Endothelial cell of umbilical vein (primary cell): ENCODE measurements at regions of chr15 and their contacts with region 1.

Region 1: GRCh38 chr15:62254137-62254934 is 89.3 kb upstream of the C2CD4B start:
- DNase-seq: peak; percentile 79
- H3K4me3 ChIP-seq: no peak overlapping the region
- H3K27ac ChIP-seq: no peak overlapping the region
- H3K4me1 ChIP-seq: no peaks in the 10 kb centered on the region
- H3K27me3 ChIP-seq: peaks cover 0 to 2% of the 10 kb centered on the region in 2 experiments
- CTCF ChIP-seq: peak; percentile 81 to 92
- POLR2A ChIP-seq: no peak

Region 2: GRCh38 chr15:61798631-61799030 is 455.7 kb before region 1 on chr15:
- CTCF ChIA-PET with region 1: no interaction called
- POLR2A ChIA-PET with region 1: no interaction called
- dilution Hi-C with region 1: no loop called
- intact Hi-C with region 1: no loop called
- DNase-seq: no peak
- H3K4me3 ChIP-seq: no peak overlapping the region
- H3K27ac ChIP-seq: no peak overlapping the region
- H3K4me1 ChIP-seq: no peaks in the 10 kb centered on the region
- H3K27me3 ChIP-seq: no peaks in the 10 kb centered on the region
- CTCF ChIP-seq: no peak
- POLR2A ChIP-seq: no peak

Region 3: DNA sequence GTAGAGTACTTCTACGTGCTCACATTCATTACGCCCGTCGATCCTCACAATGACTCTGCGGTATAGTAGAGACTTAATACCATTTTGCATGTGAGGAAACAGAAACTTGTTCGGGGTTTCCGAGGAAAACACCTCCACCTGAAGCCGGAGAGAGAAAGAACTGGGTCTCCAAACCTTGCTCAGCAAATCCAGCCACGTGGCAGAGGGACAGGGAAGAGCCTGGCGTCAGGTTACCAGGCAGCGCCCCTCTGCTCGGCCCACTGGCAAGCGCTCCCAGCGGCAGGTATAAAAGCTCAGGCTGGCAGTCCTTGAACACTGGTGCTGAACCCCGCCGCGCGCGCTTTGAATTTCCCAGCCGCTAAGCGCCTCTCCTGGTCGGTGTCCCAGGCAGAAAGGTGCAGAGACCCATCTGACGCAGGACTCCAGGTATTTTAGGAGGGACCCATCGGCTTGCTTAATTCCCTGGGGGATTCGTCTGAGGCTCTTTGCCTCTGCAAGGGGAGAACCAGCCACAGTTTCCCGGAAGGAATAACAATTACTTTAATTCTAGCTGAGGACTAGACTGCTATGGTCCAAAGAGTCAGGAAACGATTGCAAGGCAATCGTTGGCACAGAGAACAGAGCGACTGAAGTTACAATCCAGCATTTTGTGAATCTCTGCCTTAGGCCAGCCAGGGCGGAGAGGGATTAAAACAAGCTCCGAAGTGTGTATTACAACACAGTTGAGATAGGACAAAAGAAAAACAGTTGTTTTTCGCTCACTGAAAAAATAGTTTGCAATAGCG is 187.5 kb before region 1 on chr15 and contains the start of gene C2CD4A:
- CTCF ChIA-PET with region 1: interaction called, 47 read pairs
- POLR2A ChIA-PET with region 1: no interaction called
- dilution Hi-C with region 1: no loop called
- intact Hi-C with region 1: loop called (anchors 1 kb)
- DNase-seq: peak; percentile 81
- H3K4me3 ChIP-seq: peak within 1 kb of the TSS; percentile 37 to 44 (median 38)
- H3K27ac ChIP-seq: no peak within 1 kb of the TSS
- H3K4me1 ChIP-seq: peaks cover 31% of the 10 kb centered on the region
- H3K27me3 ChIP-seq: no peaks in the 10 kb centered on the region
- CTCF ChIP-seq: peak in 1 of 2 donors; percentile 43
- POLR2A ChIP-seq: no peak
- total RNA-seq, gene C2CD4A: 0.46 and 1.1 TPM in 2 replicates

Region 4: DNA sequence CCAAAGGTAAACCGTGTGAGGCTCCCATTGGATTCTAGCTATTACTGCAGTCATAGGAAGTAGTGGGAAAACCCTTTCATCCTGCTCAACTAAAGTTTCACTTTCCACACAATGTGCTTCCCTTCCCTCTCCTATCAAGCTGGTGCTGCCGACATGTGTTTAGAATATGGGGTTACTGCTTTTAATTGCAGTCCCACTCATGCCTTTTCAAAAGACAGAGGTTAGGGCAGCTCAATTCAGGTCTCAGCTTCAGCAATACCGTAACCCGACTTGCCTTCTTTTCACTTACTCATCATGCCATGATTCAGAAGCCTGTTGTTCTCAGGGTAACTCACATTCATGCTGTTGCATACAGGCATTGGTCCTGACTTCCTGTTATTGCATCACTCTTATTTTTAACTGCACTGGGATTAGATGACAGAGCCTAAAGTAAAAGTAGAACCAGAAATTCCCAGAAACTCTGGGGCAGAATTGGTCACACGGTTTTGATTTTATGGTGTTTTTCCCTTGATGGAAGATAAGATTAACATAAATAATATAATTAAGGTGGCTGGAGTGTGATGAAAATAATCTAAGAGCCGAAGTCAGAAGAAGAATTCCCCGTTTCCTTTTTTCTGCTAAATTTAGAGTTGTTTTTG is 135.0 kb before region 1 on chr15:
- CTCF ChIA-PET with region 1: interaction called, 139 read pairs
- POLR2A ChIA-PET with region 1: no interaction called
- dilution Hi-C with region 1: no loop called
- intact Hi-C with region 1: no loop called
- DNase-seq: peak; percentile 98
- H3K4me3 ChIP-seq: peak overlapping the region in 1 of 3 experiments; percentile 13
- H3K27ac ChIP-seq: peak overlapping the region; percentile 92
- H3K4me1 ChIP-seq: peaks cover 41% of the 10 kb centered on the region
- H3K27me3 ChIP-seq: no peaks in the 10 kb centered on the region
- CTCF ChIP-seq: no peak
- POLR2A ChIP-seq: no peak

Region 5: GRCh38 chr15:62165104-62165792 is 89.1 kb before region 1 on chr15 and contains the start of gene C2CD4B:
- CTCF ChIA-PET with region 1: interaction called, 30 read pairs
- POLR2A ChIA-PET with region 1: interaction called, 6 read pairs
- dilution Hi-C with region 1: no loop called
- intact Hi-C with region 1: loop called (anchors 1 kb)
- DNase-seq: peak; percentile 89
- H3K4me3 ChIP-seq: peak within 1 kb of the TSS; percentile 49 to 75 (median 66)
- H3K27ac ChIP-seq: peak within 1 kb of the TSS; percentile 78
- H3K4me1 ChIP-seq: peaks cover 31% of the 10 kb centered on the region
- H3K27me3 ChIP-seq: no peaks in the 10 kb centered on the region
- CTCF ChIP-seq: peak in 1 of 2 donors; percentile 19
- POLR2A ChIP-seq: peak; percentile 90
- total RNA-seq, gene C2CD4B: 28.4 and 31.7 TPM in 2 replicates

Region 6: DNA sequence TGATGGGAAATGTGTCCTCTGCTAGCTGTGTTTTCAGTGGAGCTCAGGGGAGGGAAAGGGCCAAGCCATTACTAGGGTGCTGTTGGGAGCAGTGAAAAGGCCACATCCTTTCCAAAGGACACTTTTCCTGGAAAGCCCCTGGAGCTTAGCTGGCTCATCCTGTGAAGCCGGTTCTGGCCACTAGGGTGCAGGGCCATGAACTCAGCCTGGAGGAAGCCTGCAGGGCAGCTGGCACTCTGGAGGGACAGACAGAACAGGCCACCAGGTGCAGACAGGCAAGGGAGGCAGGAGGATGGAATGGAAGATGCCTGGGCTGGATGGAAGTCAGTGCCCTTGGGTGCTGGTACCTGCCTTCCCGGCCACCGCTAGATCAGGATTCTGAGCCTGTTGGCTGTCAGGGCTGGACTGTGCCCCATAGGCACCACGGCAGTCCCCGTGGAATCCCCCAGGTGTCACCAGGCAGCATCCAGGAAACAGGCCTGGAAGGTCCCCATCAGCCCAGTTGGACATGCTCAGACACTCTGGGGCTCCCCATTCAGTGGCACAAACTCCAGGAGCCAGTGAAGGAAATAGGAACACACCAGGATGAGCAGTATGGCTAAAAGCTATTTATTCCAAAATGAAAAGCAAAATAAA is 13.1 kb before region 1 on chr15:
- CTCF ChIA-PET with region 1: interaction called, 12 read pairs
- POLR2A ChIA-PET with region 1: no interaction called
- dilution Hi-C with region 1: no loop called
- intact Hi-C with region 1: no loop called
- DNase-seq: peak; percentile 6
- H3K4me3 ChIP-seq: no peak overlapping the region
- H3K27ac ChIP-seq: no peak overlapping the region
- H3K4me1 ChIP-seq: no peaks in the 10 kb centered on the region
- H3K27me3 ChIP-seq: peaks cover 0 to 5% of the 10 kb centered on the region in 2 experiments
- CTCF ChIP-seq: peak; percentile 29 to 51
- POLR2A ChIP-seq: no peak